ENCODE measurements at regions of chr1 and their contacts with region 1.

Region 1: DNA sequence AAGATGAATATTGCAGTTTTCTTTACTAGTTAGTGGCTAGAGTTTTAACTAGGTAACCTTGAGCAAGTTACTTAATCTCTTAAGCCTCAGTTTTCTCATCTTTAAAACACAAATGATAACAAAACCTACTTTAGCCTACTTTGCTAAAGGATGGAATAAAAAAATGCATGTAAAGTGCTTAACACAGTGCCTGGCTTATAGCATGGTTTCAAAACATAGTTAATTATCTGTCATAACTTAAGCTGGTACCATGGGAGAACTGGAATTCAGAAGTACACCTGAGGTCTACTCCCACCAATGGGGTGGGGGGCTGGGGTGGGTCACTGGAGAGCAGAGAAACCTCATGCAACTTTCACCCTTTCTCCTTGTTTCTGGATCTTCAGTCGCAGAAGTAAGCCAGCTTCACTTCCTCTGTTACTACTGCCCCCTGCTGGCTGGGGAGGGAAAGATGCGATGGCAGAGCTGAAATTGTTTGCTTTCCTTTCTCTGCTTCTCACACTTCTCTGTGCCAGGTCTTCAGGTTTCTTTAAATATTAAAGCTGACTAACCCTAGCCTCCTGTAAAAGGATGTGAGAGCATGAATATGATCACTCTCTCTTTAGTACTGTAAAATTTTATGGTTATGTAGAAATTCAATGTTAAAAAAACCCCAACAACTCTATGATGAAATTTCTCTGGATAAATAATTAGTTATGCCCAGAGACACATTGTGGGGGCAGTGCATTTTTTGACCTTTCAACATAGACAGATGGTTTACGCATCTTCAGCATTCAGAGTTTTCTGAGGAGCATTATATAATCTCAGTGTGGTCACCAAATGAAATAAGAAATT is 324.2 kb downstream of the HLX start:
- DNase-seq: peak; percentile 84
- H3K4me3 Mint-ChIP-seq: no peak overlapping the region
- H3K27ac Mint-ChIP-seq: no peak overlapping the region
- H3K4me1 Mint-ChIP-seq: peaks cover 2% of the 10 kb centered on the region
- H3K27me3 Mint-ChIP-seq: peaks cover 2% of the 10 kb centered on the region

Region 2: DNA sequence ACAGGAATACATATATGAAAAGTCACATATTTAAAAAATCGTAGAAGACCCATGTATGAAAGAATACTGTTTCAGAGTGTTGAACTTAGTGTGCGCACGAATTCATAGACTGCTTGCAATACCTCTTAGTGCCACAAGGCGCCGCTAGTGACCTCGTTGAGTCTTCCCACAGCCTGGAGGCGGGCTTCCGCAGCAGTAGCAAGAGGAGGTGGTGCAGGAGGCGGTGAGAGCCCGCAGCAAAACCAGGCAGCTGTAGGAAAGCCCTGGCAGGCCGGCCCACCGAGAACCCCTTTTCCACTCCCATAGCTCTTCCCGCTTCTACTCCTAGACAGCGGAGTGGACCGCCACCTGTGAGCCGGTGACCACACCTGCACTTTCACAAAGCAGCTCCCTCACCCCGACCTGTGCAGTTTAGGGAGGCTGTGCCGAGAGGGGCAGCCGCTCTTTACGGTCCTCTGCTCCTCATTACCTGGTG is 393.2 kb before region 1 on chr1:
- CTCF ChIA-PET with region 1: interaction called, 16 read pairs
- intact Hi-C with region 1: loop called (anchors 1 kb)
- DNase-seq: peak; percentile 81
- H3K4me3 Mint-ChIP-seq: peak overlapping the region; percentile 22
- H3K27ac Mint-ChIP-seq: no peak overlapping the region
- H3K4me1 Mint-ChIP-seq: peaks cover 3% of the 10 kb centered on the region
- H3K27me3 Mint-ChIP-seq: peaks cover 21% of the 10 kb centered on the region

Region 3: GRCh38 chr1:220873868-220874655 is 329.4 kb before region 1 on chr1:
- CTCF ChIA-PET with region 1: interaction called, 12 read pairs
- intact Hi-C with region 1: loop called (anchors 1 kb)
- DNase-seq: peak; percentile 43
- H3K4me3 Mint-ChIP-seq: no peak overlapping the region
- H3K27ac Mint-ChIP-seq: no peak overlapping the region
- H3K4me1 Mint-ChIP-seq: peaks cover 23% of the 10 kb centered on the region
- H3K27me3 Mint-ChIP-seq: peaks cover 74% of the 10 kb centered on the region

Region 4: DNA sequence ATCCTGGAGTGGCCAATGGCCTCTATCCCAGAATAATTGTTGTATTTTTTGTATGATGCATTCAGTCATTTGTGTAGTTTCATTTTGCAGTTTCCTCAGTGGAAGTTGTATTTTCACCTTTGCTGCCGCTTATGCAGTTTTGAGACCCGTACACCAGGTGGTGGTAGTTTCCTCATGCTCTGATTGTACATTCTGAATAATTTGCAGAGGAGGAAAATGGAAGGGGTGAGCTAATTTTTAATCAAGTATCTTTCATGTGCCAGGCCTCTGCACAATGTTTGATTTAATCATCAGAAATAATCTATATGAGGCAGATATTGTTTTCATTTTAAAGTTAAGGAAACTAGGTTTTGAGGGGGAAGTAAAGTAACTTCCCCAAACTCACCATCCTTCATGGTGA is 294.7 kb before region 1 on chr1:
- CTCF ChIA-PET with region 1: interaction called, 3 read pairs
- intact Hi-C with region 1: loop called (anchors 1 kb)
- DNase-seq: no peak
- H3K4me3 Mint-ChIP-seq: no peak overlapping the region
- H3K27ac Mint-ChIP-seq: no peak overlapping the region
- H3K4me1 Mint-ChIP-seq: no peaks in the 10 kb centered on the region
- H3K27me3 Mint-ChIP-seq: peaks cover 9% of the 10 kb centered on the region

Measured in activated naive CD4-positive, alpha-beta T cell treated with anti-CD3 and anti-CD28 coated beads for 36 hours (primary cell).